ENCODE measurements at regions of chr9 and their contacts with region 1.

Region 1: GRCh38 chr9:122360891-122361290 is 9.9 kb upstream of the PTGS1 start:
- DNase-seq: no peak
- H3K4me3 ChIP-seq: no peak overlapping the region
- H3K27ac ChIP-seq: peak overlapping the region; percentile 67 to 79 (median 72)
- H3K4me1 ChIP-seq: peaks cover 0 to 36% (median 25%) of the 10 kb centered on the region in 4 donors
- H3K27me3 ChIP-seq: no peaks in the 10 kb centered on the region
- CTCF ChIP-seq: no peak
- EP300 ChIP-seq: no peak
- POLR2A ChIP-seq: no peak

Region 2: DNA sequence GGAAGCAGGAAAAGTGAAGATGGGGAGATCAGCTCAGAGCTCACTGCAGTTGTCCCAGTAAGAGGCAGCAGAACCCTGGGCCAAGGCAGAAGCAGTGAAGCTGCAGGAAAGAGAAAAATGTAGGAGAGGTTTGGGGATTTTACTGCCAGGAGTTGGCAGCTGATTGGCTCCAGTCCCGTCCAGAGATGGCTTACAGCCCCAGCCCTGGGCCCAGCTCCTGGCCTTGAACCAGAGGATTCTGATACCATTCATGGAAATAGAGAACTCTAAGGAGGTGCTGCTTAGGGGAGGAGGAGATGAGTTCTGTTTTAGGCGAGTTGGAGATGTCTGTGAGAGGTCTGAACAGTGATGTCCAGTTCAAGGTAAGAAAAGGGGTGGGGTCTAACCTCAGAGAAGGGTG is 196.6 kb before region 1 on chr9:
- intact Hi-C with region 1: loop called (anchors 5 kb)
- DNase-seq: peak; percentile 90
- H3K4me3 ChIP-seq: peak overlapping the region in 3 of 4 donors; percentile 3 to 32 (median 10)
- H3K27ac ChIP-seq: peak overlapping the region; percentile 9 to 77 (median 66)
- H3K4me1 ChIP-seq: peaks cover 0 to 34% (median 17%) of the 10 kb centered on the region in 4 donors
- H3K27me3 ChIP-seq: no peaks in the 10 kb centered on the region
- CTCF ChIP-seq: no peak
- EP300 ChIP-seq: peak in 1 of 4 donors; percentile 21
- POLR2A ChIP-seq: no peak

Region 3: DNA sequence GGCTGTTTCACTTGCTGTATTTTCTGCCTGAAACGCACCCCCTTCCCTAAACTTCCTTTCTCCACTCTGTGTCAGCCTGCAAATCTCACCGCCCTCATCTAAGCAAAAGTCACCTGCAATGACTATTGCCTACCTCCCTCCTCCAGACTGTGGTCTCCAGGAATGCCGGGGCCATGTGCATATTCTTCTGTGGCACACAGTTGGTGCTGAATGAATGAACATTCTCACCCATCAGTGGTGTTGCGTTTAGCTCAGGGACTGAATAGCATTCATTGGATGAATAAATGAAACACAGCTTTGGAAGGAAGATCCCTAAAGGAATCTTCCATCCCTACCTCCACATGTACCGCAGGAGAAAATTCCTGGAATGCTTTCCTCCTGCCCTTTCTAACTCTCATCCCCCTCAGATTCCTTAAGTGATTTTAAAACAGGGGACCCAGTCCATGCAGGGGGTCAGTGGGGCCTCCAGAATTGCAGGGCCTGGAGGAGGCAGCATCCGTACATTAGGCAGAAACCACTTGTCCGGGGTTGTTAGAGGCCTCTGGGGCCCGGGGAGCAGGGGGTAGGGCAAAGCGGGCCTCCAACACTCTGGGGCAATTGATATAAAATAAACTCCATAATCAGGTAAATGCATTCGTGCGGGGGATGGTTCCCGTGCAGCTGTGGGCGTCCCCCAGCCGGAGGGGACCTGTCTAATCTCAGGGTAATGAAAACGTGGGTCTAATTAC is 18.4 kb before region 1 on chr9:
- intact Hi-C with region 1: loop called (anchors 1 kb)
- DNase-seq: peak; percentile 46
- H3K4me3 ChIP-seq: no peak overlapping the region
- H3K27ac ChIP-seq: no peak overlapping the region
- H3K4me1 ChIP-seq: peaks cover 0 to 15% (median 10%) of the 10 kb centered on the region in 4 donors
- H3K27me3 ChIP-seq: no peaks in the 10 kb centered on the region
- CTCF ChIP-seq: no peak
- EP300 ChIP-seq: no peak
- POLR2A ChIP-seq: no peak

Measured in sigmoid colon (tissue), 7 donors.